ENCODE measurements at regions of chr15 and their contacts with region 1.

Region 1: GRCh38 chr15:55319537-55320237 is 665 bp downstream of the PIGB start:
- DNase-seq: no peak
- H3K4me3 ChIP-seq: peak overlapping the region; percentile 64 to 99 (median 86)
- H3K27ac ChIP-seq: peak overlapping the region in 46 of 59 donors; percentile 54 to 94 (median 82)
- H3K27me3 ChIP-seq: no peaks in the 10 kb centered on the region
- CTCF ChIP-seq: no peak

Region 2: DNA sequence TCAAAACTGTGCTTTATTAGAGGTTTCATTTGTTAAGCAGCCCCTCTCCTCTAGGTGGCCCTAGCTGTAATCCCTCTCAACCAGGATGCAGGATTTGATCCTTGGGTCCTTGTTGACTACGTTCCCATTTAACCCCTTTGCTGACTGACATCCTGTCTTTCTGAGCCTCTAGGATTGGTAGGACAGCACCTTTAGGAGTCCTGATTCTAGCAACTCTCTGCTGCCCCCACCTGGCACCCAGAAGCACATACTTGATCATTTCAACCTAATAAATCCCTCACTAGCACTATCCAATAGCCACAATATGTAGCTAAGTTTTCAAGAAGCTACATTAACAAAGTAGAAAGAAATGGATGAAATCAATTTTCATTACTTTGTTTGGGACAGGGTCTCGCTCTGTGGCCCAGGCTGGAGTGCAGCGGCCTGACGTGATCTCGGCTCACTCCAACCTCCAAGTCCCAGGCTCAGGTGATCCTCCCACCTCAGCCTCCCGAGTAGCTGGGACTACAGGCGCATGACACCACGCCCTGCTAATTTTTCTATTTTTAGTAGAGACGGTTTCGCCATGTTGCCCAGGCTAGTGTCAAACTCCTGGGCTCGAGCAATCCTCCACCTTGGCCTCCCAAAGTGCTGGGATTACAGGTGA is 151.2 kb before region 1 on chr15:
- intact Hi-C with region 1: no loop called
- DNase-seq: peak; percentile 28 to 75 (median 57)
- H3K4me3 ChIP-seq: no peak overlapping the region
- H3K27ac ChIP-seq: no peak overlapping the region
- H3K27me3 ChIP-seq: no peaks in the 10 kb centered on the region
- CTCF ChIP-seq: peak; percentile 53 to 84 (median 68)

Region 3: DNA sequence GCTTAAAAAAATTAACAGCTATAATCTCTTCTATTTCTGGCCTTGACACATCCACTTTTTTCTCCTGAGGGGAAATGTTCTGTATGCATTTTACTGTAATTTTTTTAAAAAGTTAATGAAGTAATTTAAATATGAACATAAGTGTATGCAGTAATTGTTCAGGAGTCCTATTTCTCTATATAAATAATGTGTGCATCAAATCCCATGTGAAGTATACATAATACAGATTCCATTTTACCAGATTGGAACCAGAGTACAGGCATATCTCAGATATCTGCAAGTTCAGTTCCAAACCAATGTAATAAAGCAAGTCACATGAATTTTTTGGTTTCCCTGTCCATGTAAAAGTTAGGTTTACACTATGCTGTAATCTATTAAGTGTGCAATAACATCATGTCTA is 61.9 kb after region 1 on chr15:
- intact Hi-C with region 1: no loop called
- DNase-seq: no peak
- H3K4me3 ChIP-seq: no peak overlapping the region
- H3K27ac ChIP-seq: no peak overlapping the region
- H3K27me3 ChIP-seq: no peaks in the 10 kb centered on the region
- CTCF ChIP-seq: no peak

Region 4: GRCh38 chr15:55407949-55408791 is 88.5 kb after region 1 on chr15 and contains the starts of genes CCPG1 and PIERCE2:
- intact Hi-C with region 1: loop called in 1 of 2 experiments (anchors 5 kb)
- DNase-seq: peak; percentile 72 to 94 (median 90)
- H3K4me3 ChIP-seq: peak within 1 kb of the TSS; percentile 64 to 99 (median 87)
- H3K27ac ChIP-seq: peak within 1 kb of the TSS; percentile 1 to 97 (median 91)
- H3K27me3 ChIP-seq: no peaks in the 10 kb centered on the region
- CTCF ChIP-seq: peak; percentile 60 to 95 (median 80)
- total RNA-seq, gene CCPG1: 69.0 to 139 (median 106) TPM
- total RNA-seq, gene PIERCE2: 0.82 to 9.2 (median 3.5) TPM in 118 of 120 experiments, not detected in the others

Region 5: GRCh38 chr15:55535436-55535835 is 215.7 kb after region 1 on chr15:
- intact Hi-C with region 1: no loop called
- DNase-seq: no peak
- H3K4me3 ChIP-seq: no peak overlapping the region
- H3K27ac ChIP-seq: no peak overlapping the region
- H3K27me3 ChIP-seq: peaks cover 0 to 12% (median 0%) of the 10 kb centered on the region in 45 donors
- CTCF ChIP-seq: no peak

Measured in dorsolateral prefrontal cortex (tissue), 120 donors.